K562 (cell line): ENCODE measurements at regions of chr16 and their contacts with region 1.

Region 1: DNA sequence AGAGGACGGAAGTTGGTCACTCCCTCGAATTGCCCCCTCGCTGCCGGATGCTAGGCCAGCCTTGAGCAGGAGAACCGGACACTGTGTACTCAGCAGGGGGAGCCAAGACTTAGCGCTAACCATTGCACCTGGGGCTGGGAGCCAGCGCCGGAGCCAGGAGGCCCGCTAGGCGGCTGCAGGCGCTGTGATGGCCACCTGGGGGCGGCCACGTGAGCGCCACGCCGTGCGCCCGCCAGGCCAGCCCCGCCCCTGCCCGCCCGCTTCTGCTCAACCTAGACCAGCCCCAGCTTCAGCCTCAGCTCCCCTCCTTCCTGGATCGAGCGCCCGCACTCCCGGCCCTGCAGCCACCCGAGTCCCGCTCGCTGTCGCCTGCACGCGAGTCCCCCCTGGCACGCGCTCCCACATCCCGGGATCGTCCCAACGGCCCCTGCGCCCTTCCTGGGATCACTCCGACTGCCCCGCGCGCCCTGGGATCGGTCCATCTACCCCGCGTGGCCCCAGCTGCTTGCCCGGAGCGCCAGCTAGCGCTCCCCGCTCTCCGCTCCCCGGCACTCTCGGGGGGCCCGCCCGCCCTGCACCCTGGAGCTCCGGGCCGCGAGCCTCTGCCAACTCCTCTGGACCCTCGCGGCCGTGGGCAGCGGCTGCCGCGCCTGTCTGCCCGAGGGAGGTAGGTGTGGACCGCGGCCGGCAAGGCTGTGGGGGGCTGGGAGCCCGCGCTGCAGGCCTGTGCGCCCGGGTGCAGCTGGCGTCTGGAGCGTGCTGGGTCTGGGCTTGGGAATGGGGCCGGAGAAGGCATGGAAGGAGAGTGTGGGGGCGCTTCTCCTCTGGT is at the start of gene EEF2K:
- DNase-seq: peak; percentile 93 to 98 (median 94)
- ATAC-seq: peak; percentile 96
- H3K4me3 ChIP-seq: peak within 1 kb of the TSS; percentile 94
- H3K27ac ChIP-seq: peak within 1 kb of the TSS; percentile 86
- H3K4me1 ChIP-seq: peaks cover 13 to 24% of the 10 kb centered on the region in 2 experiments; a peak in 4 of 5 replicates
- H3K27me3 ChIP-seq: no peaks in the 10 kb centered on the region
- CTCF ChIP-seq: peak; percentile 90 to 99 (median 95)
- EP300 ChIP-seq: peak; percentile 65
- POLR2A ChIP-seq: no peak
- RAD21 ChIP-seq: peak; percentile 90 to 94
- polyA plus RNA-seq, gene EEF2K: 3.0 to 3.4 TPM

Region 2: DNA sequence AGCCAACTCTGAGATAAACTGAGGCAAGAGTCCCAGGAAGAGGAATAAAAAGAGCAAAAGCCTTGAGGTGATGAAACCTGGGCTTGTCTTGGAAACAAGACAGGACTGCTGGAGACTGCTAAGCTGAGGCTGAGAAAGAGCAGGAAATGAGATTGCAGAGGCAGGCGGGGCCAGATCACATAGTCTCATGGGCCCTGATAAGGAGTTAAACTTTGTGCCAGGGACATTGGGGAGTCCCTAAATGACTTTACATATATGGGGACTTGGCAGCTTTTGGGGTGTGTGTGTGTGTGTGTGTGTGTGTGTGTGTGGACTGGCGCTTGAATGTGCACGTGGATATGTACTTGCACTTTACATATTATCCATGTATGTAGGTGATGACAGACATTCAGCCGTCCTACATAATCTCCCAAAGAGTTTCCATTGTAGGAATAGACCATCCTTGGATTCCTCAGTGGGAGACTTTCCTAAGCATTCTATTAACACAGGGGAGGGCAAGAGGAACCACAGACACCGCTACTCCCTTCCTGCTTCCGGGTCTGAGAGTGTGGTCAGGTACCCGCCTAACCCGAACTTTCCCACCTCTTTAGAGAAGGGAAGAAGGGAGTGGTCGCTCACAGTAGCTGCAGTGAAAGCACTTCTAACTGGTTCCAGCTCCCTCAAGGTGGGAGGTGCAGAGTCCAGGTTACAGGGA is 1182.6 kb before region 1 on chr16:
- CTCF ChIA-PET with region 1: no interaction called
- POLR2A ChIA-PET with region 1: no interaction called
- in situ Hi-C with region 1: no loop called
- intact Hi-C with region 1: no loop called
- DNase-seq: peak in 1 of 4 experiments; percentile 23
- ATAC-seq: peak; percentile 68
- H3K4me3 ChIP-seq: no peak overlapping the region
- H3K27ac ChIP-seq: no peak overlapping the region; the same call in 2 of the 3 replicates
- H3K4me1 ChIP-seq: peaks cover 0 to 11% of the 10 kb centered on the region in 2 experiments; a peak in 3 of 5 replicates
- H3K27me3 ChIP-seq: no peaks in the 10 kb centered on the region; a peak in 2 of 5 replicates
- CTCF ChIP-seq: no peak
- EP300 ChIP-seq: no peak
- POLR2A ChIP-seq: no peak
- RAD21 ChIP-seq: no peak

Region 3: GRCh38 chr16:22216191-22216831 is 10.1 kb after region 1 on chr16:
- CTCF ChIA-PET with region 1: no interaction called
- POLR2A ChIA-PET with region 1: interaction called, 18 read pairs
- in situ Hi-C with region 1: no loop called
- intact Hi-C with region 1: no loop called
- DNase-seq: peak; percentile 52 to 78 (median 66)
- ATAC-seq: peak; percentile 73
- H3K4me3 ChIP-seq: no peak overlapping the region
- H3K27ac ChIP-seq: peak overlapping the region; percentile 69; the same call in 2 of the 3 replicates
- H3K4me1 ChIP-seq: peaks cover 30 to 32% of the 10 kb centered on the region in 2 experiments
- H3K27me3 ChIP-seq: no peaks in the 10 kb centered on the region
- CTCF ChIP-seq: no peak
- EP300 ChIP-seq: peak; percentile 76
- POLR2A ChIP-seq: no peak
- RAD21 ChIP-seq: no peak